Heart left ventricle (tissue), 16 donors: ENCODE measurements at regions of chr12 and their contacts with region 1.

Region 1: DNA sequence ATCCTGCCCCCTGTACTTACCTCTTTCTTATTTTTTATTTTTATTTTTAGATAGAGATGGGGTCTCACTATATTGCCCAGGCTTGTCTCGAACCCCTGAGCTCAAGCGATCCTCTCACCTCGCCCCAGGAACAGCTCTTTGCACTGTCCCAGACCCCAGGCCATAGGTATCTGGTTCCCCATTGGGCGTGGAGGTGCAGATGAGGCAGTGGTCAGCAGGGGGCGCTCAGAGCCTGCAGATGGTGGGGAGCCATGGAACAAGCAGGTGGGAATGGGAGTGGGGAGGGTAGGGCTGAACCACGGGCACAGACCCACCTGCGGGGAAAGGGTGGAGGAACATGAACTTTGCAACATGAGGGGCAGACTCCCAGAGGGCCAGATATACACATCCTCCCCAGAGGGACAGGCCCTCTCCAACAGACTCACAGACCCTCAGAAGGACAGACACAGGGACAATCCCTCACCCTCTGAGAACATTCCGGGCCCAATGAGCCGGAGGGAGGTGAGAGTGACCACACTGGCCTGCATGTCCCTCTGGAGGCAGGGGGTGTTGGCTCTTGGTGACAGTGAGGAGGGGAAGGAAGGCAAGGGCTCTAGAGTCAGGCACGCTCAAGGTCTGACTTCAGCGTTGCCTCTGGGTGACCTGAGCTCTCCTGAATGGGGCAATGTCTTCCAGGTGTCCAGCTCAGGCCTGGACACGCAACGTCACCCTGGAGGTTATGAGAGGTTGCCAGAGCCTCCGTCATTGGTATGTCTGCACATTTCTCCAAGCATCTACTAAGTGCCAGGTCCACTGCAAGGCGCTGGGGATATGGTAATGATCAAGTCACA is 34.9 kb downstream of the KRT80 start:
- DNase-seq: peak; percentile 65 to 86 (median 75)
- ATAC-seq: peak; percentile 49 to 77 (median 72)
- H3K4me3 ChIP-seq: no peak overlapping the region
- H3K27ac ChIP-seq: no peak overlapping the region
- H3K4me1 ChIP-seq: peaks cover under 1 to 23% (median 6%) of the 10 kb centered on the region in 12 donors
- H3K27me3 ChIP-seq: no peaks in the 10 kb centered on the region
- CTCF ChIP-seq: peak; percentile 84 to 95 (median 92)
- POLR2A ChIP-seq: no peak

Region 2: GRCh38 chr12:51531978-51532497 is 624.9 kb before region 1 on chr12:
- intact Hi-C with region 1: no loop called
- DNase-seq: peak in 4 of 5 donors; percentile 55 to 68 (median 64)
- ATAC-seq: peak; percentile 61 to 93 (median 86)
- H3K4me3 ChIP-seq: no peak overlapping the region
- H3K27ac ChIP-seq: no peak overlapping the region
- H3K4me1 ChIP-seq: peaks cover 0 to 3% (median 0%) of the 10 kb centered on the region in 12 donors
- H3K27me3 ChIP-seq: peaks cover 0 to 34% (median 14%) of the 10 kb centered on the region in 9 donors
- CTCF ChIP-seq: peak; percentile 77 to 89 (median 84)
- POLR2A ChIP-seq: no peak

Region 3: DNA sequence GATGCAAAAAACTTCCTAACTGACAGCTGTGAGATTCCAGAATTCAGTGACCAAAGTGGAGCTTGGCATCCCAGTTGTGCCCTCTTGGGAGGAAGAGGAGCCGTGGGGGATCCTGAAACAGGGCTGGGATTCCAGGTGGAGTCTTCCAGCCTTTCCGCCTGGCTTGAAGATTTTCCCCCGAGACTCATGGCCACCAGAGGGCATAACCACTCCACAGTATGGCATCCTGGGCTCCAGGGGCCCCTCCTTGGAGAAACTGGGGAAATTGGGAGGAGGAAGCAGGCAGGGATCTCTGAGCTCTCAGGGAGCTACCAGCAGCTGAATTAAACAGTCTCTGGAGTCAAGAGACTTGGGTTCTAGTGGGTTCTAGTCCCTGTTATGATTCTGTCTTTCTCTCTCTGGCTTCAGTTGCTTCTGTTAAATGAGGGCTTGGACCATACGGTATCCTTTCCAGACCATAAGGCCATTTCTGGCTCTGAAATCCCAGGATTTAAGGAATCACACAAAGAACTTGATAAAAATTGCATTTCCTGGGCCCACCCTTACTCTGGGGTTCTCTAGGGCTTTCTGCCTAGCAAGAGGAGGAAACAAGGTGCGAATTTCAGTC is 152.8 kb before region 1 on chr12:
- intact Hi-C with region 1: no loop called
- DNase-seq: peak in 4 of 5 donors; percentile 59 to 64 (median 60)
- ATAC-seq: peak; percentile 16 to 40 (median 30)
- H3K4me3 ChIP-seq: no peak overlapping the region
- H3K27ac ChIP-seq: no peak overlapping the region
- H3K4me1 ChIP-seq: peaks cover 0 to 47% (median 17%) of the 10 kb centered on the region in 12 donors
- H3K27me3 ChIP-seq: peaks cover 0 to 20% (median 4%) of the 10 kb centered on the region in 9 donors
- CTCF ChIP-seq: peak; percentile 48 to 77 (median 70)
- POLR2A ChIP-seq: no peak

Region 4: DNA sequence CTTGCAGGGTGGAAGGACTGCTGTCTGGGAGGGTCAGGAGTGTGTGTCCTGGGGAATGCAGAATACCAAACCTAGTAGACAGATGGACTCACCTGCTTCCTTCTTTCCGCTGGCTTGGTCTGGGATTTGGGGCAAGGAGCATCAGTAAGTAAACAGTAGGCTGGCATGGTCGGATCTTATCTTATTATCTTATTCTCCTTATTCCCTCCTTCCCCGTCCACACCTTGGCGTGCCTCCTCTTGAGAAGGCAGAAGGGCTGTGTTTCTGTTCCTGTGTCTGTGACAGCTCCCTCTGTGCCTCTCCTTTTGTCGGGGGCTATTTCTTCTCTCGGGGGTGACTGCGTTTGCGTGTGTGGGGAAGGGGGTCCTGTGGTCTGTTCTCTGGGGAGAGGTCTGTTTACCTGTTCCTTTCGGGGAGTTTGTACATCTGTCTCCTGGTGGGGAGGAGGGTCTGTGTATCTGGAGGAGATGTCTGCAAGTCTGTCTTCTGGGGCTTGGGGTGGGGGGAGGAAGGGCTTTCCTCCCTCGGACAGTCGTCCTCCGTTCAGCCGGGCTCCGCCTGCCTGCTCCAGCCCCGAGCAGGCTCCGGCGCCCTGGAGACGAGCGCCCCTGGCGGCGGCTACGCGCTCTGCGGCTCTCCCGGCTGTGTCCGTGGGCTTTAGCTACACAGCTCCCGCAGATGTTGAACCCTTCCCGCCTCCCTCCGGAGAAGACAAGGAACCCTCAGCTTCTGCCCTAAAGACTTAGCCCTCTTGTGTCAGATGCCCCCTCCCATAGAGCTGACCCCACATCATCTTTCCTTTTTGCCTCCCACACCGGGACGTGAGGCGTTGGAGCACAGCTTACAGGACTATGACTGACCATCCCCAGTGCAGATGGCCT is 121.8 kb after region 1 on chr12:
- intact Hi-C with region 1: loop called in 2 of 10 experiments (anchors 2 to 5 kb)
- DNase-seq: peak; percentile 61 to 90 (median 70)
- ATAC-seq: peak; percentile 79 to 96 (median 92)
- H3K4me3 ChIP-seq: no peak overlapping the region
- H3K27ac ChIP-seq: peak overlapping the region in 1 of 12 donors; percentile 79
- H3K4me1 ChIP-seq: peaks cover 0 to 29% (median 11%) of the 10 kb centered on the region in 12 donors
- H3K27me3 ChIP-seq: peaks cover 0 to 31% (median 3%) of the 10 kb centered on the region in 9 donors
- CTCF ChIP-seq: peak; percentile 94 to 99 (median 98)
- POLR2A ChIP-seq: no peak

Region 5: GRCh38 chr12:52372216-52373154 is 215.5 kb after region 1 on chr12:
- intact Hi-C with region 1: loop called in 3 of 10 experiments (anchors 2 to 5 kb)
- DNase-seq: peak; percentile 70 to 84 (median 79)
- ATAC-seq: peak; percentile 66 to 90 (median 82)
- H3K4me3 ChIP-seq: no peak overlapping the region
- H3K27ac ChIP-seq: no peak overlapping the region
- H3K4me1 ChIP-seq: peaks cover 0 to 10% (median 0%) of the 10 kb centered on the region in 12 donors
- H3K27me3 ChIP-seq: peaks cover 0 to 12% (median 0%) of the 10 kb centered on the region in 9 donors
- CTCF ChIP-seq: peak; percentile 60 to 84 (median 74)
- POLR2A ChIP-seq: no peak

Region 6: GRCh38 chr12:52515927-52516831 is 359.2 kb after region 1 on chr12:
- intact Hi-C with region 1: loop called in 1 of 10 experiments (anchors 10 kb)
- DNase-seq: no peak
- ATAC-seq: no peak
- H3K4me3 ChIP-seq: no peak overlapping the region
- H3K27ac ChIP-seq: no peak overlapping the region
- H3K4me1 ChIP-seq: no peaks in the 10 kb centered on the region
- H3K27me3 ChIP-seq: no peaks in the 10 kb centered on the region
- CTCF ChIP-seq: no peak
- POLR2A ChIP-seq: no peak

Region 7: GRCh38 chr12:52879394-52880351 is 722.7 kb after region 1 on chr12:
- intact Hi-C with region 1: loop called in 9 of 10 experiments (anchors 1 to 5 kb)
- DNase-seq: peak; percentile 76 to 87 (median 82)
- ATAC-seq: peak; percentile 70 to 92 (median 89)
- H3K4me3 ChIP-seq: peak overlapping the region in 9 of 12 donors; percentile 11 to 46 (median 33)
- H3K27ac ChIP-seq: peak overlapping the region in 1 of 12 donors; percentile 42
- H3K4me1 ChIP-seq: peaks cover 0 to 18% (median 8%) of the 10 kb centered on the region in 12 donors
- H3K27me3 ChIP-seq: peaks cover 0 to 17% (median 0%) of the 10 kb centered on the region in 9 donors
- CTCF ChIP-seq: peak; percentile 55 to 77 (median 66)
- POLR2A ChIP-seq: no peak